Gastrocnemius medialis (tissue), 4 donors: ENCODE measurements at regions of chr10 and their contacts with region 1.

Region 1: GRCh38 chr10:50291261-50291850 is 40.0 kb upstream of the ASAH2 start:
- DNase-seq: no peak
- ATAC-seq: no peak
- H3K4me3 ChIP-seq: no peak overlapping the region
- H3K27ac ChIP-seq: no peak overlapping the region
- H3K4me1 ChIP-seq: no peaks in the 10 kb centered on the region
- H3K27me3 ChIP-seq: no peaks in the 10 kb centered on the region
- CTCF ChIP-seq: peak in 4 of 5 experiments; percentile 36 to 46 (median 42)
- POLR2A ChIP-seq: no peak

Region 2: DNA sequence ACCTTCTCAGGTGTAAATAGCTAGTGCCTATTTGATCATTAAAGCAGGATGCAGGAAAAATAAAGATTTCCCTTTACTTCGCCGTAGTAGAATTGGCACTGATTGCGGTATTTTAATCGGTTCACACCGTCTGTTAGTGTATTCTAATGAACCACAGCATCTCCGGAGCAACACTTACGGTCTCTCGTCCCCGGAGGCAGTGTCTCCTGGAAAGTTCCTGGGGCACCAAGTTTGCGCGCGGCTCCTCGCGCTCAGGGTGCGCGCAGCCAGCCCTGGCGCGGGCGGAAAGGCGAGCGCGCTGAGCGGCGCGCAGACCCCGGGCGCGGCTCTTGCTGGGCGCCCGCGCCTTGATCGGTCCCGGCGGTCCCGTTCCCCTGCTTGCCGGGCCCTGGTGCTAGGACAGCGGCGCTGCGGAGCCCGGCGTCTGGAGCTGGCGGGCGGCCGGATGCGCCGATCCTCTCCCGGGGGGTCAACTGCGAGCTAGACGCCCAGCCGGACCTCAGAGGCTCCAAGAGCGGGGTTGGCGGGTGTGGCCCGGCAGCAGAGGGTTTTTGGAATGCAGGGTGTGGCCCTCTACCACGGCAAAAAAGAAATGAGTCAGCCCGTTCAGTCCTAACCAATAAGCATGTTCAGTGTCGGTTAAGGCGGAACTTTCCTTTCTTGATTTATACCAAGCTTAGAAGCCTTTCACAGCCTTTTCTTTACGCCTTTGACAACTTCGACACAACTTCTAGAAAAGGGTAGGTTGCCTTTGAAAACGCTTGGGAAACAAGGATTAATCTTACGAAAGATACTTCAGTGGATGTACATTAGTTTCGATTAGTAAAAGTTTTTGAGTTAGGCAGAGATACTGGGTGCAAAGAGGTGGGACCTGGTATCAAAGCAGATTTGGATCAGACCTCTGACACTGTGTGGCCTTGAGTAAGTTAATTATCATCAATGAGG is 126.8 kb after region 1 on chr10:
- in situ Hi-C with region 1: no loop called
- intact Hi-C with region 1: loop called (anchors 1 kb)
- DNase-seq: peak; percentile 39 to 48
- ATAC-seq: peak; percentile 81 to 85
- H3K4me3 ChIP-seq: peak overlapping the region; percentile 74 to 84 (median 76)
- H3K27ac ChIP-seq: peak overlapping the region; percentile 60 to 77 (median 66)
- H3K4me1 ChIP-seq: peaks cover 0 to 21% of the 10 kb centered on the region in 2 donors
- H3K27me3 ChIP-seq: no peaks in the 10 kb centered on the region
- CTCF ChIP-seq: peak in 1 of 5 experiments; percentile 11
- POLR2A ChIP-seq: no peak

Region 3: GRCh38 chr10:50636618-50637579 is 345.5 kb after region 1 on chr10:
- in situ Hi-C with region 1: loop called in 1 of 4 experiments (anchors 10 kb)
- intact Hi-C with region 1: no loop called
- DNase-seq: no peak
- ATAC-seq: no peak
- H3K4me3 ChIP-seq: no peak overlapping the region
- H3K27ac ChIP-seq: no peak overlapping the region
- H3K4me1 ChIP-seq: no peaks in the 10 kb centered on the region
- H3K27me3 ChIP-seq: no peaks in the 10 kb centered on the region
- CTCF ChIP-seq: no peak
- POLR2A ChIP-seq: no peak